ENCODE measurements at regions of chr10 and their contacts with region 1.

Region 1: DNA sequence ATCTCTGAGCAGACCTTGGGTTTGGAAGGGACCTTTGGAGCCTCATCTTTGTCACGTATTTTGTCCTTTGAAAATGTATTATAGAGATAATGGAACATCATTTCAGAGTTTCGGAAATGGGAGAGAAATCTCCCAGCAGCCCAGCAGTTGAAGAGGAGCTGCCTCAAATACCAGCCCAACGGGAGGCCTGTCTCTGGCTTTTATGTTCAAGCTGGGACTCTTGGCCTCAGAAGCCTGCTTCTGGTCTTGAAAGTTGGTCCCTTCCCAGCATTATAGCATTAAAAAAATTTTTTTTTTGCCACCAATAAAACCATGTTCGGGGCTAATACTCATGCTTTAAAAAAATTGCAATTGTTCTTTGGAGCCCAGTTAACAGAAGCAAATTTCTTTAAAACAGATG is 73.4 kb upstream of the CTBP2 start:
- DNase-seq: no peak
- H3K4me3 ChIP-seq: no peak overlapping the region
- H3K27me3 ChIP-seq: no peaks in the 10 kb centered on the region
- CTCF ChIP-seq: no peak

Region 2: DNA sequence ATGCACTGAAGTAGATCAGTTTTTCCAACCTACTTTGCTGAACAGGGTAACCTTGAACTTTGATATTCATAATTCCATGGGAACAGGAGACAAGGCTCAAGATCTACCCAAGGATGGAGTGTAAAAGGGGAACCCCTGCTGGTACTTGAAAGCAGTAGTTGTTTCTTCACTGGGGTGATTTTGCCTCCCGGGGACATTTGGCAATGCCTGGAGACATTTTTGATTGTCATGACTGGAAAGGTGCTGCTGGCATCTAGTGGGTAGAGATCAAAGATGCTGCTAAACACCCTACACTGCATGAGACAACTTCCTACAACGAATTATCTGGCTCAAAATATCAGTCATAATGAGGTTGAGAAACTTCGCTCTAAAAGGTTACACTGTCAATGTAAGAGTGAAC is 141.5 kb after region 1 on chr10:
- CTCF ChIA-PET with region 1: no interaction called
- POLR2A ChIA-PET with region 1: interaction called, 11 read pairs
- DNase-seq: no peak
- H3K4me3 ChIP-seq: no peak overlapping the region
- H3K27me3 ChIP-seq: no peaks in the 10 kb centered on the region
- CTCF ChIP-seq: no peak

Measured in BJ (cell line).